Heart left ventricle (tissue), 16 donors: ENCODE measurements at regions of chr16 and their contacts with region 1.

Region 1: DNA sequence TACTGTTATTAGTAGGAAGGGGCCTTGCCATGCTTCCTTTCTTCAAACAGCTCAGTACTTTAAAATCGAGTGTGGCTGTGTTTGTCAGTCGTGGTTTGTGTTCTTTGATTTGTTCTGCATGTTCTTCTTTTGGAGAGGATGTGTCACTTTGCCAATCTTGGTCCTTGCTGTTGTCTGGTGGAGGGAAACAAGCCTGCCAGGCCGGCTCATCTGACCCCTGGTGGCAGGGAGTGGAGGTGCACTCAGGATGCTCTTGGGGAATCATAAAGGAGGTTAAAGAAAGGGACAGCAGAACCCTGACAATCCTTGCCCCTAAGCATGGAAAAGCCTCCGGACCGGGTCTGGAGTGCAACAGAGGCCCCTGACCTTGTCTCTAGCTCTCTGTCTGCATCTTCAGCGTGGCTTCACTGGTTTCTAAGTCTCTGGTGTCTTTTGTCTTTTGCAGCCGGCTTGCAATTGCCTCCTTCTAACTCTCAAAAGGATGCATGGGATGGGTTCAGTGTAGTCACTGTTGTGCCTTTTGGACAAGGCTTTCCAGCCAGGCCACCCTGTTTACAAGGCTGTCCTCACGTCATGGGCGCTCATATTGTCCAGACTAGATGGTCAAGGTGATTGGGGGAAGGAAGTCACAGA is 135.8 kb downstream of the WWOX start:
- DNase-seq: peak; percentile 47 to 76 (median 55)
- ATAC-seq: peak; percentile 33 to 76 (median 66)
- H3K4me3 ChIP-seq: no peak overlapping the region
- H3K27ac ChIP-seq: no peak overlapping the region
- H3K4me1 ChIP-seq: peaks cover 0 to 18% (median 5%) of the 10 kb centered on the region in 12 donors
- H3K27me3 ChIP-seq: no peaks in the 10 kb centered on the region
- CTCF ChIP-seq: peak; percentile 73 to 94 (median 87)
- POLR2A ChIP-seq: no peak

Region 2: DNA sequence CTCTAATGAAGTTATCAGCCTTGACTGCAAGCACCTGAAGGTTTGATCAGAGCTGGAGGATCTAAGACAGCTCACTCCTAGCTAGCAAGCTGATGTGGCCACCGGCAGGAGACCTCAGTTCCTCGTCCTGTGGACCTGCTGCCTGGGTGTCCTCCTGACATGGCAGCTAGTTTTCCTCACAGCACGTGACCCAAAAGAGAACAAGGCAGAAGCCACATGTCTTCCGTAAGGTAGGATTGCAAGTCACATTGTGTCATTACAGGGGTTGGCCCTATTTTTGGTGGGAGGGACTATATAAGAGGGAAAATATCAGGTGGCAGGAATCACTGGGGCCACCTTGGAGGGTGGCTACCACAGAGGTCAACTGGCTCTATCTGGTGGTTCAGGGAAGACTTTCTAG is 153.9 kb before region 1 on chr16:
- intact Hi-C with region 1: no loop called
- DNase-seq: no peak
- ATAC-seq: no peak
- H3K4me3 ChIP-seq: no peak overlapping the region
- H3K27ac ChIP-seq: no peak overlapping the region
- H3K4me1 ChIP-seq: no peaks in the 10 kb centered on the region
- H3K27me3 ChIP-seq: peaks cover 0 to 8% (median 0%) of the 10 kb centered on the region in 9 donors
- CTCF ChIP-seq: no peak
- POLR2A ChIP-seq: no peak

Region 3: GRCh38 chr16:78396046-78396445 is 160.8 kb after region 1 on chr16:
- intact Hi-C with region 1: loop called in 1 of 10 experiments (anchors 10 kb)
- DNase-seq: no peak
- ATAC-seq: no peak
- H3K4me3 ChIP-seq: no peak overlapping the region
- H3K27ac ChIP-seq: no peak overlapping the region
- H3K4me1 ChIP-seq: peaks cover 0 to 6% (median 0%) of the 10 kb centered on the region in 12 donors
- H3K27me3 ChIP-seq: no peaks in the 10 kb centered on the region
- CTCF ChIP-seq: peak in 9 of 12 donors; percentile 9 to 61 (median 27)
- POLR2A ChIP-seq: no peak

Region 4: DNA sequence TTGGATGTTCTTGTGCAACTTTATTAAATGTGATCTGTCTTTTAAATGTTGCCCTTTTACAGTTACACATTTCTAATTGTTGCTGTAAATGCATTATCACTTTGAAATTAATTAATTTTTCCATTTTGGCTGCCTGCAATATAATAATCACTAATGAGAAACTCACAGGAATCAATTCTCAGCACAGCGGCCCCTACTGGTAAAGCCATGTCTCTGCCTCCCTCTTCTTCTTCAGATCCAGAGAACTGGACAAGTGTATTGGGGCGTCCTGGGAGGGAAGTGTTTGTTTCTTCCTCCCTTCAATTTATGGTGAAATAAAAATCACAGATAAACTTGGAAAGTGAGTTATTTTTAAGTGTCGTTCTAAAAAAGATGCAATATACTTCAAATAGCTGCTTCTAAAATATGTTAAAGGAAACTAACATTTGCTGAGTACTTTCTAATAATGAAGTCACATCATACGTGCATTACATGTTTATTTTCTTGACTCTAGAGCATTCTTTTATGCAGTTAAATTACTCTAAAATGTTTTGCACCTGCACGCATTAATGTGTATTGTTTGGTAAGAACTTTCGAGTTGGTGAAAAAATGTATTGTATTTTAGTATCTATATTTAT is 202.2 kb after region 1 on chr16:
- intact Hi-C with region 1: loop called in 3 of 10 experiments (anchors 5 to 10 kb)
- DNase-seq: peak in 1 of 5 donors; percentile 23
- ATAC-seq: no peak
- H3K4me3 ChIP-seq: no peak overlapping the region
- H3K27ac ChIP-seq: no peak overlapping the region
- H3K4me1 ChIP-seq: no peaks in the 10 kb centered on the region
- H3K27me3 ChIP-seq: no peaks in the 10 kb centered on the region
- CTCF ChIP-seq: peak; percentile 79 to 93 (median 88)
- POLR2A ChIP-seq: no peak

Region 5: GRCh38 chr16:78770353-78771091 is 535.2 kb after region 1 on chr16:
- intact Hi-C with region 1: loop called in 1 of 10 experiments (anchors 10 kb)
- DNase-seq: peak; percentile 70 to 90 (median 77)
- ATAC-seq: peak; percentile 75 to 88 (median 83)
- H3K4me3 ChIP-seq: no peak overlapping the region
- H3K27ac ChIP-seq: peak overlapping the region in 1 of 12 donors; percentile 37
- H3K4me1 ChIP-seq: peaks cover 0 to 19% (median 5%) of the 10 kb centered on the region in 12 donors
- H3K27me3 ChIP-seq: no peaks in the 10 kb centered on the region
- CTCF ChIP-seq: peak; percentile 78 to 97 (median 90)
- POLR2A ChIP-seq: no peak